ENCODE measurements at regions of chr19 and their contacts with region 1.

Region 1: DNA sequence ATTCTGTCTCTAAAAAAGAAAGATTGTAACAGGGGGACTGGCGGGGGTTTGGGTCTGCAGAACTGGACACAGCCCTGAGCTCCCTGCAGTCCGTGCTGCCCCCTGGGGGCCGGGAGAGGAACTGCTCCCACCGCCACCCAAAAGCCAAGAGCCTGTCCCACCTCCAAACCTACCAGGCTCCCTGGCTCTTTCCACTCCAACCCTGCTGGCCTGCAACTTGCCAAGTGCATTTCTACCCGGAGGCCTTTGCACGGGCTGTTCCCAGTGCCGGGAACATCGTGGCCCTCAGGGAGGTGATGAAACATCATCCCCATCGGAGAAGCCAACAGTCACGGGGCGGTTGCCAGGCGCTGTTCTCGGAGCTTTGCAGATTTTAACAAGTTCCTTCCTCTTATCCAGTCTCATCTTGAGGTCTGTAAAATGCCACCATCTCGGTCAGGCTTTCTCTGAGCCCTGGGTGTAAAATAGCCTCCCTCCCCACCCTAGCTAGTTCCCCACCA is 50.7 kb downstream of the SMIM24 start:
- DNase-seq: peak; percentile 83
- H3K4me3 Mint-ChIP-seq: no peak overlapping the region
- H3K27ac Mint-ChIP-seq: no peak overlapping the region
- H3K4me1 Mint-ChIP-seq: peaks cover 7% of the 10 kb centered on the region
- H3K27me3 Mint-ChIP-seq: no peaks in the 10 kb centered on the region

Region 2: GRCh38 chr19:3304871-3305423 is 124.7 kb before region 1 on chr19:
- CTCF ChIA-PET with region 1: interaction called, 11 read pairs
- DNase-seq: peak; percentile 85
- H3K4me3 Mint-ChIP-seq: no peak overlapping the region
- H3K27ac Mint-ChIP-seq: no peak overlapping the region
- H3K4me1 Mint-ChIP-seq: no peaks in the 10 kb centered on the region
- H3K27me3 Mint-ChIP-seq: peaks cover 14% of the 10 kb centered on the region

Region 3: DNA sequence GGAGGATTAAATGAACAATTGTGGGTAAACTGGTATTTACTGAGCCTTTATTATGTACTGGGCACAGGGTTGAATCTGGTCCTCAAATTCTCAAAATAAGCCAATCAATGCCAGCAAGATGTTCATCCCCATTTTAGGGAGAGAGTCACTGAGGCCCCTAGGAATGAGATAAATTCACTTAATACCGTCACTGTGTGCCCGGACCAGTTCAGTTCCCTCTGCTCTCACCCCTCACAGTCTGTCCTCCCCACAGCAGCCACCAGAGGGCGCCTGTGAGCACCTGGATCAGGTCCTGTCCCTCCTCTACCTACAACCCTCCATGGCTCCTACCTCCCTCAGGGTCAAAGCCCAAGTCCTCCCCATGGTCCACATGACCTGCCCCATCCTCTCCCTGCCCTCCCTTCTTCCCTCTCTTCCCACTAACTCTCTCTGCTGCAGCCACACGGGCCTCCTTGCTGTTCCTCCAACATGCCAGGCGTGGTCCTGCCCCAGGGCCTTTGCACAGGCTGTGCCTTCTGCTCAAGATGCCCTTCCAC is 105.2 kb before region 1 on chr19:
- CTCF ChIA-PET with region 1: interaction called, 49 read pairs
- DNase-seq: peak; percentile 85
- H3K4me3 Mint-ChIP-seq: no peak overlapping the region
- H3K27ac Mint-ChIP-seq: no peak overlapping the region
- H3K4me1 Mint-ChIP-seq: no peaks in the 10 kb centered on the region
- H3K27me3 Mint-ChIP-seq: peaks cover 23% of the 10 kb centered on the region

Region 4: GRCh38 chr19:3387645-3388589 is 41.7 kb before region 1 on chr19:
- CTCF ChIA-PET with region 1: no interaction called
- DNase-seq: no peak
- H3K4me3 Mint-ChIP-seq: no peak overlapping the region
- H3K27ac Mint-ChIP-seq: no peak overlapping the region
- H3K4me1 Mint-ChIP-seq: peaks cover 16% of the 10 kb centered on the region
- H3K27me3 Mint-ChIP-seq: no peaks in the 10 kb centered on the region

Measured in activated naive CD4-positive, alpha-beta T cell treated with anti-CD3 and anti-CD28 coated beads, Interleukin-2, amount 10 ng/mL, durations not matched to agents 7 days and 5 days (primary cell).